ENCODE measurements at regions of chr7 and their contacts with region 1.

Region 1: GRCh38 chr7:155598810-155599210 is 45.7 kb upstream of the RBM33 start:
- DNase-seq: peak; percentile 46
- H3K4me3 ChIP-seq: no peak overlapping the region
- H3K27ac ChIP-seq: no peak overlapping the region
- H3K4me1 ChIP-seq: no peaks in the 10 kb centered on the region
- H3K27me3 ChIP-seq: peaks cover 13% of the 10 kb centered on the region
- CTCF ChIP-seq: peak; percentile 98

Region 2: GRCh38 chr7:155545348-155545747 is 53.5 kb before region 1 on chr7:
- CTCF ChIA-PET with region 1: no interaction called
- dilution Hi-C with region 1: loop called (anchors 5 kb)
- in situ Hi-C with region 1: no loop called
- intact Hi-C with region 1: loop called (anchors 2 kb)
- DNase-seq: no peak
- H3K4me3 ChIP-seq: no peak overlapping the region
- H3K27ac ChIP-seq: no peak overlapping the region
- H3K4me1 ChIP-seq: peaks cover 15% of the 10 kb centered on the region
- H3K27me3 ChIP-seq: peaks cover 5% of the 10 kb centered on the region
- CTCF ChIP-seq: peak; percentile 5 to 21

Region 3: GRCh38 chr7:155644178-155644970 is 45.6 kb after region 1 on chr7 and contains the start of gene RBM33:
- CTCF ChIA-PET with region 1: no interaction called
- dilution Hi-C with region 1: no loop called
- in situ Hi-C with region 1: no loop called
- intact Hi-C with region 1: loop called (anchors 2 kb)
- DNase-seq: peak; percentile 87
- H3K4me3 ChIP-seq: peak within 1 kb of the TSS; percentile 94 to 96 (median 95)
- H3K27ac ChIP-seq: peak within 1 kb of the TSS; percentile 79
- H3K4me1 ChIP-seq: peaks cover 9% of the 10 kb centered on the region
- H3K27me3 ChIP-seq: no peaks in the 10 kb centered on the region
- CTCF ChIP-seq: no peak
- total RNA-seq, gene RBM33: 22.2 to 54.3 TPM

Region 4: DNA sequence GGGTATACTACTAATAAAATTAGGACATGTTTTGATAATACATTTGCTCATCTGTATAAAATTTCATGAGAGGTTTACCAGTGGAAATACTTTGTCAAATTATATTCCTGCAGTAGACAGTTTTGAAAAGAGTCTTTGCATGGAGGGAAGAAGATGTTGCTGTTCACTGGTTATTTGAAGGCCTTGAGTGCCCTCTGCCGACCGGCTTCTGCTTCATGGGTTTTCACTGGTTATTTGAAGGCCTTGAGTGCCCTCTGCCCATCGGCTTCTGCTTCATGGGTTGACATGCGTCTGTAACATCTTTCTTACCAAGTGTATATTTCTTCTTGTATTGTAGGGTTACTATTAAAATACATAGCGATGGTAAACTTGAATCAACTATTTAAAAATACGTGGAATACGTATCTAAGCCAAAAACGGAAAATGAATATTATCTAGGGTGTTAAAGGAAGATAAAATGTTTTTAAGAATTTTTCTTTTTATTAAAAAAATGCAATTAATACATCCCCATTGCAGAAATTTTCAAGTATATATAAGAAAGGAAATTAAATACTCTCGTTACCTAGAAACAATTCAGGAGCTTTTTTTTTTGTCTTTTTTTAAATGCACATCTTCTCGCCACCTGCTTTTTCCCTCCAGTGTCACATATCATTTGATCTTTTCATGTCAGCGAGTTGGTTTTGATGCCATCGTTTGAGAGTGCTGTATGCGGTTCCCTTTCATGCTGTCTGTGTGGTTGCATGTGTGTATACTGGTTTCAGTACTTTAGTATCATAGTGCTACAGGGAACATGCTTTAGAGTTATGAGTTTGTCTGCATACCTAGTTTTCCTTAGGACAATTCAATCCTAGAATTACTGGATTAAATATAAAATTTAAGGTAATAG is 140.1 kb after region 1 on chr7:
- CTCF ChIA-PET with region 1: no interaction called
- dilution Hi-C with region 1: no loop called
- in situ Hi-C with region 1: loop called (anchors 10 kb)
- intact Hi-C with region 1: loop called (anchors 1 kb)
- DNase-seq: peak; percentile 60
- H3K4me3 ChIP-seq: no peak overlapping the region
- H3K27ac ChIP-seq: no peak overlapping the region
- H3K4me1 ChIP-seq: peaks cover 10% of the 10 kb centered on the region
- H3K27me3 ChIP-seq: no peaks in the 10 kb centered on the region
- CTCF ChIP-seq: peak; percentile 57 to 70